Heart left ventricle (tissue), 16 donors: ENCODE measurements at regions of chr11 and their contacts with region 1.

Region 1: GRCh38 chr11:122038543-122038942 is 77.5 kb downstream of the BLID start:
- DNase-seq: no peak
- ATAC-seq: peak in 1 of 4 donors; percentile 36
- H3K4me3 ChIP-seq: no peak overlapping the region
- H3K27ac ChIP-seq: no peak overlapping the region
- H3K4me1 ChIP-seq: peaks cover 0 to 23% (median 11%) of the 10 kb centered on the region in 12 donors
- H3K27me3 ChIP-seq: no peaks in the 10 kb centered on the region
- CTCF ChIP-seq: no peak
- POLR2A ChIP-seq: no peak

Region 2: DNA sequence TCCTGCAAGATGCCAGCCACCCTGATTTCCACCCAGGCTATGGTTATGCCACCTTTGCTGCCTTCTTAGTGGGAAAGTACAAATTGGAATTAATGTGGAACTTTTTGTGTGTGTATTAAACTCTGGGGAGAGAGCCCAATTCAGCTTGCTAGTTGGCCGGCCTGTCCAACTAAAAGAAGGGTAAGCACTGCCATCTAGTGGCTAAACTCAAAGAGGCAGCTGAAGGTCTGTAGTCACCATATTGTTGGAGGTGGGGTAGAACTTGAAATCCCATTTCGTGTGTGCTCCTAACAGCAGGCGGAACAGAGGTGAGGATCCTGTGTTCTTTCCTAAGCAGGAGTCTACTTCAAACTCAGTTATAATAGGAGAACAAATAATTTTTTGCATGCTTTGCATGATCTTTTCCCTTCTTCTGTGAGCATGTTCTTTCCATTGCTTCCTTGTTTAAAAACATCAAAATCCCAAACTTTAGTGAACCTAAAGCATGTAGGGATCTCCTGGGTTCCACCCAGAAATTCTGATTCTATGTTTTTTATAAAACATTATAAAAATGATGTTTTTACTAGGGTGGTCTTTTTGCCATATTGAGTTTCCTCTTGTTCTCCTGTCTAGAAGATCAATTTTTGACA is 447.0 kb before region 1 on chr11:
- intact Hi-C with region 1: no loop called
- DNase-seq: peak in 4 of 5 donors; percentile 43 to 67 (median 57)
- ATAC-seq: peak; percentile 45 to 82 (median 78)
- H3K4me3 ChIP-seq: no peak overlapping the region
- H3K27ac ChIP-seq: no peak overlapping the region
- H3K4me1 ChIP-seq: peaks cover 0 to 19% (median 0%) of the 10 kb centered on the region in 12 donors
- H3K27me3 ChIP-seq: no peaks in the 10 kb centered on the region
- CTCF ChIP-seq: peak; percentile 78 to 92 (median 87)
- POLR2A ChIP-seq: no peak

Region 3: GRCh38 chr11:122085264-122085663 is 46.7 kb after region 1 on chr11:
- intact Hi-C with region 1: loop called in 1 of 10 experiments (anchors 10 kb)
- DNase-seq: no peak
- ATAC-seq: peak; percentile 86 to 93 (median 90)
- H3K4me3 ChIP-seq: no peak overlapping the region
- H3K27ac ChIP-seq: peak overlapping the region; percentile 13 to 87 (median 55)
- H3K4me1 ChIP-seq: peaks cover 0 to 37% (median 6%) of the 10 kb centered on the region in 12 donors
- H3K27me3 ChIP-seq: no peaks in the 10 kb centered on the region
- CTCF ChIP-seq: no peak
- POLR2A ChIP-seq: no peak

Region 4: GRCh38 chr11:122105044-122105758 is 66.7 kb after region 1 on chr11:
- intact Hi-C with region 1: no loop called
- DNase-seq: peak in 1 of 5 donors; percentile 24
- ATAC-seq: no peak
- H3K4me3 ChIP-seq: no peak overlapping the region
- H3K27ac ChIP-seq: peak overlapping the region in 3 of 12 donors; percentile 2 to 21 (median 6)
- H3K4me1 ChIP-seq: peaks cover 0 to 35% (median 14%) of the 10 kb centered on the region in 12 donors
- H3K27me3 ChIP-seq: peaks cover 0 to 6% (median 0%) of the 10 kb centered on the region in 9 donors
- CTCF ChIP-seq: no peak
- POLR2A ChIP-seq: no peak